Endothelial cell of umbilical vein (primary cell): ENCODE measurements at regions of chr9 and their contacts with region 1.

Region 1: GRCh38 chr9:94014065-94014654 is 59.0 kb upstream of the BARX1 start:
- DNase-seq: peak; percentile 35
- H3K4me3 ChIP-seq: no peak overlapping the region
- H3K27ac ChIP-seq: no peak overlapping the region
- H3K4me1 ChIP-seq: peaks cover 3% of the 10 kb centered on the region
- H3K27me3 ChIP-seq: peaks cover 0 to 5% of the 10 kb centered on the region in 2 experiments
- CTCF ChIP-seq: peak; percentile 41 to 50
- POLR2A ChIP-seq: no peak

Region 2: GRCh38 chr9:94002316-94003140 is 11.6 kb before region 1 on chr9:
- CTCF ChIA-PET with region 1: interaction called, 61 read pairs
- POLR2A ChIA-PET with region 1: no interaction called
- dilution Hi-C with region 1: no loop called
- intact Hi-C with region 1: no loop called
- DNase-seq: peak; percentile 57
- H3K4me3 ChIP-seq: no peak overlapping the region
- H3K27ac ChIP-seq: no peak overlapping the region
- H3K4me1 ChIP-seq: no peaks in the 10 kb centered on the region
- H3K27me3 ChIP-seq: peaks cover 9 to 18% of the 10 kb centered on the region in 2 experiments
- CTCF ChIP-seq: peak; percentile 61 to 77
- POLR2A ChIP-seq: no peak

Region 3: DNA sequence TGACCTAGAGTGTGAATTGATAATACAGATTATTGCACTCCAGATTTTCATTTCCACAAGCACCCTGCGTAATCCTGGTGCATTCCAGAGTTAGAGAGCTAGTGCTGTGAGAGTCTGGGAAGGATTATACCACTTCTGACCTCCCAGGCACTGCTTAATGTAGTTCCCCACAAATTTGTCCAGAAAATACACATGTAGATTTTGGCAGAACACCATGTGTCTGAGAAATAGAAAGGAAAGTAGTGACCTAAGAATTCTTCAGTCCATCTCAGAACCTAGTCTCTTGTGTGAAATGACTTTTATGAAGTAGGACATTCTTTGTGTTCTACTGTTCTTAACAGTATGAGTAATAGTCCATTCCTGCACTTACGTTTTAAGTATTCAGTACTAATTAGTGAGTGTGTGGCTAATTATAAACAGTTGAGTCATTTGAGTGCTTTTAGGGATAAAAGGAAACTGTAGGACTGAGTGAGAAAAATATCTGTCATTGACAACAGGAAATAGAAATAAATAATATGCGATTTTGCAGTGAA is 42.3 kb after region 1 on chr9:
- CTCF ChIA-PET with region 1: interaction called, 17 read pairs
- POLR2A ChIA-PET with region 1: no interaction called
- dilution Hi-C with region 1: no loop called
- intact Hi-C with region 1: no loop called
- DNase-seq: peak; percentile 58
- H3K4me3 ChIP-seq: no peak overlapping the region
- H3K27ac ChIP-seq: peak overlapping the region; percentile 39
- H3K4me1 ChIP-seq: peaks cover 11% of the 10 kb centered on the region
- H3K27me3 ChIP-seq: no peaks in the 10 kb centered on the region
- CTCF ChIP-seq: no peak
- POLR2A ChIP-seq: no peak

Region 4: GRCh38 chr9:94157050-94157764 is 143.0 kb after region 1 on chr9:
- CTCF ChIA-PET with region 1: interaction called, 18 read pairs
- POLR2A ChIA-PET with region 1: no interaction called
- dilution Hi-C with region 1: no loop called
- intact Hi-C with region 1: no loop called
- DNase-seq: peak; percentile 83
- H3K4me3 ChIP-seq: no peak overlapping the region
- H3K27ac ChIP-seq: peak overlapping the region; percentile 27
- H3K4me1 ChIP-seq: peaks cover 10% of the 10 kb centered on the region
- H3K27me3 ChIP-seq: no peaks in the 10 kb centered on the region
- CTCF ChIP-seq: no peak
- POLR2A ChIP-seq: peak; percentile 45

Region 5: DNA sequence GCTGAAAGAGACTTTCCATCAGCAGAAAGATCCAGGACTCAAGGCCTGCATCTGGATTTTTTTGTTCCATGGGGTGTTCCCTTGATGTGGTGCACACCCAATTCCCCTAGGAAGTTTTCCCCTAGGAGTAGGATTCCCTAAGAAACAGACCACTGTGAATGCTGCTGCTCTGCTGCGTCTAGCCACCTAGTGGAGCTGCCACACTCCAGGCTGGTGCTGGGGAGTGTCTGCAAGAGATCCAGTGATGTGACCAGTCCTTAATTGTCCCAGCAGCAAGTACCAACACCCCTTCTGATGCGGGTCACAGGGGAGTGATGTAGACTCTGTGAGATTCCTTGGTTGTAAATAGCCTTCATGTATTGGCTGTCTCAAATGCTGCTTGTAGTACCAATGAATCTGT is 183.4 kb after region 1 on chr9:
- CTCF ChIA-PET with region 1: interaction called, 12 read pairs
- POLR2A ChIA-PET with region 1: no interaction called
- dilution Hi-C with region 1: no loop called
- intact Hi-C with region 1: no loop called
- DNase-seq: no peak
- H3K4me3 ChIP-seq: no peak overlapping the region
- H3K27ac ChIP-seq: no peak overlapping the region
- H3K4me1 ChIP-seq: no peaks in the 10 kb centered on the region
- H3K27me3 ChIP-seq: no peaks in the 10 kb centered on the region
- CTCF ChIP-seq: no peak
- POLR2A ChIP-seq: no peak

Region 6: GRCh38 chr9:94603259-94604160 is 589.4 kb after region 1 on chr9:
- CTCF ChIA-PET with region 1: no interaction called
- POLR2A ChIA-PET with region 1: no interaction called
- dilution Hi-C with region 1: no loop called
- intact Hi-C with region 1: loop called (anchors 10 kb)
- DNase-seq: peak; percentile 53
- H3K4me3 ChIP-seq: no peak overlapping the region
- H3K27ac ChIP-seq: no peak overlapping the region
- H3K4me1 ChIP-seq: no peaks in the 10 kb centered on the region
- H3K27me3 ChIP-seq: peaks cover 3% of the 10 kb centered on the region in 2 experiments
- CTCF ChIP-seq: peak; percentile 67 to 79
- POLR2A ChIP-seq: no peak